ENCODE measurements at regions of chr13 and their contacts with region 1.

Region 1: GRCh38 chr13:79480954-79481684 is at the start of gene NDFIP2:
- DNase-seq: peak; percentile 52 to 94 (median 86)

Region 2: GRCh38 chr13:79336966-79337365 is 144.2 kb before region 1 on chr13:
- intact Hi-C with region 1: no loop called
- DNase-seq: no peak

Region 3: DNA sequence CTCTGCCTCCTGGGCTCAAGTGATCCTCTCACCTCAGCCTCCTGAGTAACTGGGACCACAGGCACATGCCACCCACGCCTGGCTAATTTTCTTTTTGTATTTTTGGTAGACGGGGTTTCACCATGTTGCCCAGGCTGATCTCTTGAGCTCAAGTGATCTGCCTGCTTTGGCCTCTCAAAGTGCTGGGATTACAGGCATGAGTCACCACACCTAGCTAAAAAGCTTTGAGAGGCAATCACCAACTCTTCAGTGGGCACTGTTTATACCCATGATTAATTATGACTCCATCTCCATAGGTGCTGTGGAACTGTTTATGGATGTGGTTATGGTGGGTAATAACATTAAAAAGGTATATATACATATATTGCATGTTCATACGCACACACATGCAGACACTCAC is 67.6 kb before region 1 on chr13:
- intact Hi-C with region 1: loop called (anchors 5 kb)
- DNase-seq: no peak

Region 4: GRCh38 chr13:79533781-79534400 is 52.8 kb after region 1 on chr13:
- intact Hi-C with region 1: loop called (anchors 5 kb)
- DNase-seq: no peak

Measured in head of caudate nucleus (tissue), 42 donors.